ENCODE measurements at regions of chr15 and their contacts with region 1.

Region 1: GRCh38 chr15:73972984-73973682 is 19.0 kb downstream of the STOML1 start:
- DNase-seq: peak; percentile 86
- ATAC-seq: peak; percentile 81
- H3K4me3 ChIP-seq: peak overlapping the region in 4 of 5 experiments; percentile 6 to 55 (median 26)
- H3K4me3 Mint-ChIP-seq: peak overlapping the region; percentile 42
- H3K27ac ChIP-seq: no peak overlapping the region
- H3K27ac Mint-ChIP-seq: no peak overlapping the region
- H3K4me1 ChIP-seq: peaks cover 16 to 17% of the 10 kb centered on the region in 2 donors
- H3K4me1 Mint-ChIP-seq: peaks cover 20% of the 10 kb centered on the region
- H3K27me3 ChIP-seq: peaks cover 0 to 20% (median 13%) of the 10 kb centered on the region in 4 experiments
- H3K27me3 Mint-ChIP-seq: peaks cover 23% of the 10 kb centered on the region
- CTCF ChIP-seq: peak; percentile 82

Region 2: GRCh38 chr15:74007820-74008371 is 34.8 kb after region 1 on chr15:
- CTCF ChIA-PET with region 1: interaction called, 20 read pairs
- POLR2A ChIA-PET with region 1: no interaction called
- intact Hi-C with region 1: loop called (anchors 5 kb)
- DNase-seq: peak; percentile 56
- ATAC-seq: peak; percentile 84
- H3K4me3 ChIP-seq: peak overlapping the region in 1 of 5 experiments; percentile 22
- H3K4me3 Mint-ChIP-seq: peak overlapping the region; percentile 78
- H3K27ac ChIP-seq: peak overlapping the region; percentile 69 to 87
- H3K27ac Mint-ChIP-seq: peak overlapping the region; percentile 89
- H3K4me1 ChIP-seq: peaks cover 33 to 52% of the 10 kb centered on the region in 2 donors
- H3K4me1 Mint-ChIP-seq: peaks cover 54% of the 10 kb centered on the region
- H3K27me3 ChIP-seq: no peaks in the 10 kb centered on the region
- H3K27me3 Mint-ChIP-seq: no peaks in the 10 kb centered on the region
- CTCF ChIP-seq: no peak

Region 3: DNA sequence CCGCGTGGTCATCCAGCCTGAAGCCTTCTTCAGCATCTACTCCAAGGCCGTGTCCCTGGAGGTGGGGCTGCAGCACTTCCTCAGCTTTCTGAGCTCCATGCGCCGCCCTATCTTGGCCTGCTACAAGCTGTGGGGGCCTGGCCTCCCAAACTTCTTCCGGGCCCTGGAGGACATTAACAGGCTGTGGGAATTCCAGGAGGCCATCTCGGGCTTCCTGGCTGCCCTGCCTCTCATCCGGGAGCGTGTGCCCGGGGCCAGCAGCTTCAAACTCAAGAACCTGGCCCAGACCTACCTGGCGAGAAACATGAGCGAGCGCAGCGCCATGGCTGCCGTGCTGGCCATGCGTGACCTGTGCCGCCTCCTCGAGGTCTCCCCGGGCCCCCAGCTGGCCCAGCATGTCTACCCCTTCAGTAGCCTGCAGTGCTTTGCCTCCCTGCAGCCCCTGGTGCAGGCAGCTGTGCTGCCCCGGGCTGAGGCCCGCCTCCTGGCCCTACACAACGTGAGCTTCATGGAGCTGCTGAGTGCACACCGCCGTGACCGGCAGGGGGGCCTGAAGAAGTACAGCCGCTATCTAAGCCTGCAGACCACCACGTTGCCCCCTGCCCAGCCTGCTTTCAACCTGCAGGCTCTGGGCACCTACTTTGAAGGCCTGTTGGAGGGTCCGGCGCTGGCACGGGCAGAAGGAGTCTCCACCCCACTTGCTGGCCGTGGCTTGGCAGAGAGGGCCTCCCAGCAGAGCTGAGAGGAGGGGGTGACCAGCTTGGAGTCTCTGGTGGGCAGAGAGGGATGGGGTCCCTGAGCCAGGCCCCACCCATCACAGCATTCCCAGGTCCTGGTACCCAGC is 71.4 kb after region 1 on chr15:
- CTCF ChIA-PET with region 1: interaction called, 43 read pairs
- POLR2A ChIA-PET with region 1: no interaction called
- intact Hi-C with region 1: loop called (anchors 5 kb)
- DNase-seq: no peak
- ATAC-seq: no peak
- H3K4me3 ChIP-seq: no peak overlapping the region
- H3K4me3 Mint-ChIP-seq: no peak overlapping the region
- H3K27ac ChIP-seq: no peak overlapping the region
- H3K27ac Mint-ChIP-seq: no peak overlapping the region
- H3K4me1 ChIP-seq: peaks cover 4 to 6% of the 10 kb centered on the region in 2 donors
- H3K4me1 Mint-ChIP-seq: peaks cover 7% of the 10 kb centered on the region
- H3K27me3 ChIP-seq: no peaks in the 10 kb centered on the region
- H3K27me3 Mint-ChIP-seq: no peaks in the 10 kb centered on the region
- CTCF ChIP-seq: no peak

Region 4: GRCh38 chr15:74134387-74135027 is 161.4 kb after region 1 on chr15:
- CTCF ChIA-PET with region 1: interaction called, 4 read pairs
- POLR2A ChIA-PET with region 1: no interaction called
- intact Hi-C with region 1: loop called (anchors 1 kb)
- DNase-seq: peak; percentile 73
- ATAC-seq: peak; percentile 43
- H3K4me3 ChIP-seq: no peak overlapping the region
- H3K4me3 Mint-ChIP-seq: peak overlapping the region; percentile 75
- H3K27ac ChIP-seq: no peak overlapping the region
- H3K27ac Mint-ChIP-seq: peak overlapping the region; percentile 75
- H3K4me1 ChIP-seq: peaks cover 60 to 64% of the 10 kb centered on the region in 2 donors
- H3K4me1 Mint-ChIP-seq: peaks cover 49% of the 10 kb centered on the region
- H3K27me3 ChIP-seq: peaks cover 0 to 85% (median 60%) of the 10 kb centered on the region in 4 experiments
- H3K27me3 Mint-ChIP-seq: peaks cover 79% of the 10 kb centered on the region
- CTCF ChIP-seq: peak; percentile 38

Region 5: DNA sequence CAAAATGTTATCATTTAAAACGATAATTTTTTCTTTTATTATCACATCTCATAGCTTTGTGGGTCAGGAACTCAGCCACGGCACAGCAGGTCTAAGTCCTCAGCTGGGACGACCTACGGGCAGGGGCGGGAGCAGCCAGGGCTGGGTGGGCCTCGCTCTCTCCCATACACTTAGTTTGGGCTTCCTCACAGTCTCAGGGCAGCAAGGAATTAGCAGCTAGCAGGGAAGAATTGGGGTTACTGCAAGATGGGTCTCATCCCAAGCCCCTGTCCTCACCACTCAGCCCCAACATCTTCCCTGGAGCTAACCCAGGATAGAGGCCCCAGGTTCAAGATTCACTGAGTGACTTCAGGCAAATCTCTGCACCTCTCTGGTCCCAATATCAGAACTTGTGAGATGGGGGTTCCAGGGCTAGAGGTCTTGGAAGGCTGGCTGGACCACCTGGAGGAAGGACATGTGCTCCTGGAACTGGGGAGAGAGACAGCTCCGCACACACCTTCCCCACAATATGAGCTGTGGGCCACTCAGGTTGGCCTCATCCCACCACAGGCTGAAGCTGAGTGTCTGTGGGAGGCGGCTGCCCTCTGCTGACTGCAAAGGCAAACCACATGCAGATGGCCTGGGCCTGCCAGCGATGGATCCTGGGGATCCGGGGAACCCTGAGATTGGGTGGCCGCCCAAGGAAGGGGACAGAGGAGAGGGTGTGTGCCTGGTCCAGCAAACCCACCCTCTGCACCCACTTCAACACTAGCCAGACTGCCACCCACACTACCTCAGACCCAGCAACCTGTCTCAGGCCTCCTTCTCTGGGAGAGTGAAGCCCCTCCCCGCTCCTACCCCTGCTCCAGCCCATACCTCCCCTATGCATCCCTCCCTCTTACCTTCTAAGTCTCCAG is 349.3 kb after region 1 on chr15:
- CTCF ChIA-PET with region 1: interaction called, 40 read pairs
- POLR2A ChIA-PET with region 1: no interaction called
- intact Hi-C with region 1: no loop called
- DNase-seq: peak; percentile 68
- ATAC-seq: peak; percentile 73
- H3K4me3 ChIP-seq: no peak overlapping the region
- H3K4me3 Mint-ChIP-seq: no peak overlapping the region
- H3K27ac ChIP-seq: no peak overlapping the region
- H3K27ac Mint-ChIP-seq: no peak overlapping the region
- H3K4me1 ChIP-seq: peaks cover 0 to 19% of the 10 kb centered on the region in 2 donors
- H3K4me1 Mint-ChIP-seq: peaks cover 2% of the 10 kb centered on the region
- H3K27me3 ChIP-seq: peaks cover 0 to 10% (median 0%) of the 10 kb centered on the region in 4 experiments
- H3K27me3 Mint-ChIP-seq: peaks cover 21% of the 10 kb centered on the region
- CTCF ChIP-seq: peak; percentile 73